Activated T-helper 2 cell treated with anti-CD3 and anti-CD28 coated beads, Interferon-gamma antibody, Interleukin-2, Interleukin-4, amounts not matched to agents 10 μg/mL and 5 μg/mL and 100 μg/mL, durations not matched to agents 14 hours and 24 hours and 36 hours (primary cell): ENCODE measurements at regions of chr3 and their contacts with region 1.

Region 1: DNA sequence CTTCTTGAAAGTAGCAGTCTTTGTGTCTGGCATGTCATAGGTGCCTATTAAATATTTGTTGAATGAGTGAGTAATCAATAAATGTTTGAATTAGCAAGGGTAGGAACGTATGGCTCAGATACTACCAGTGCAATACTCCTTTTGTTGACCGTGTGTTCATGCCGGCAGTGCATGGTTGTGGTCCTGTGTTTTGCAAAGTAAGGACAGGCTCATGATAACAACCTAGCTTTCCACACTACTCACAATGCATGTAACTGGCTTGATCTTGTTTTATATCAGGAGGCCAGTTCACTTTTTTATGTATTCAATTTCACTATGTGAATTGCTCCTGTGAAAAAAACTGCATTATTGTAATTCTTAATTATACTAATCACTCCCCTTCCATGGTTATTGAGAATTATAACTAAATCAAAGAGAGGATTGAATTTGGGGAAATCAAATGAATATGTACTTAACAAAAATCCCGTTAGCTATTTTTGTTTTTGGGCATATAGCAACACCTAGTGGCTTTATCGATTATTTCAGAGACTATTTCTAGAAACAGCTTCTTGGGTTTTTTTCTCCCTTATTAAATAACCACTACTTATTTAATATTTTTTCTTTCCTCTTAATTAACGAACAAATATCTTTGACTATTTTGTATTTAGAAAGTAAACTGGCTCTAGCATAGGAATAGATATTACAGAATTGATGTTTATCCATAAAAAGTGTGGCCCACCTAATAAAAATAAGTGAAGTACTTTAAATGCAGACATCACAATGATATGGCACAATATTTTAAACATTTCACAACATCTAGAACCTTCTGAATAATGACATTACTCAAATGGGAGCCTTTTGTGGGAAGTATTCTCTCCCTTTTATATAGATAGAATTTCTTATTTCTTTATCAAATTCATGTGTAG is 218.5 kb downstream of the BBX start:
- DNase-seq: no peak
- H3K4me3 Mint-ChIP-seq: no peak overlapping the region
- H3K27ac Mint-ChIP-seq: no peak overlapping the region
- H3K4me1 Mint-ChIP-seq: no peaks in the 10 kb centered on the region
- H3K27me3 Mint-ChIP-seq: no peaks in the 10 kb centered on the region

Region 2: DNA sequence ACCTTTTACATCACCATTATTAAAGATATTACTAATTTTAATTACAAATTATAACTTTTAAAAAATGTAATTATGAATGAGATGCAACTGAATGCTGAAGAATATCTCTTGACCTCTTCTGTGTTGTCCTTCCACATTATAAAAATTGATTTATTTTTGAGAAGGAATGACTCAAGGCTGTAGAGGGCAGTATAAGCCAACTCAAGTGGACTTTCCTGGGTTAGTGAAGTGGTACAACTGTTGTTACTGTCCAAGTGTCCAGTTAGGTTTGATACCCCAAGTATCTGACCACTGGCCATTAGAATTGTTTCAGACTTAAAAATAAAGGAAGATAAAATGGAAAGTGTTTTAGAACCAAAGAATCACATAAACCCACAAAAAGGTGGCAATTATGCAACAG is 166.6 kb before region 1 on chr3:
- intact Hi-C with region 1: loop called (anchors 10 kb)
- DNase-seq: no peak
- H3K4me3 Mint-ChIP-seq: no peak overlapping the region
- H3K27ac Mint-ChIP-seq: no peak overlapping the region
- H3K4me1 Mint-ChIP-seq: peaks cover 8% of the 10 kb centered on the region
- H3K27me3 Mint-ChIP-seq: no peaks in the 10 kb centered on the region

Region 3: GRCh38 chr3:107633327-107634098 is 107.7 kb before region 1 on chr3:
- intact Hi-C with region 1: no loop called
- DNase-seq: no peak
- H3K4me3 Mint-ChIP-seq: peak overlapping the region; percentile 8
- H3K27ac Mint-ChIP-seq: peak overlapping the region; percentile 52
- H3K4me1 Mint-ChIP-seq: peaks cover 30% of the 10 kb centered on the region
- H3K27me3 Mint-ChIP-seq: no peaks in the 10 kb centered on the region

Region 4: GRCh38 chr3:107690522-107691138 is 50.6 kb before region 1 on chr3:
- intact Hi-C with region 1: loop called (anchors 5 kb)
- DNase-seq: no peak
- H3K4me3 Mint-ChIP-seq: no peak overlapping the region
- H3K27ac Mint-ChIP-seq: no peak overlapping the region
- H3K4me1 Mint-ChIP-seq: no peaks in the 10 kb centered on the region
- H3K27me3 Mint-ChIP-seq: no peaks in the 10 kb centered on the region